Breast epithelium (tissue), 4 donors: ENCODE measurements at regions of chr10 and their contacts with region 1.

Region 1: GRCh38 chr10:31707093-31708039 is 221.3 kb downstream of the ARHGAP12 start:
- DNase-seq: no peak
- H3K4me3 ChIP-seq: peak overlapping the region in 1 of 3 donors; percentile 45
- H3K27ac ChIP-seq: peak overlapping the region; percentile 59 to 91
- H3K4me1 ChIP-seq: peaks cover 6 to 11% of the 10 kb centered on the region in 2 donors
- H3K27me3 ChIP-seq: no peaks in the 10 kb centered on the region
- CTCF ChIP-seq: no peak
- POLR2A ChIP-seq: no peak

Region 2: GRCh38 chr10:31171402-31172083 is 535.8 kb before region 1 on chr10:
- intact Hi-C with region 1: loop called (anchors 10 kb)
- DNase-seq: no peak
- H3K4me3 ChIP-seq: no peak overlapping the region
- H3K27ac ChIP-seq: no peak overlapping the region
- H3K4me1 ChIP-seq: no peaks in the 10 kb centered on the region
- H3K27me3 ChIP-seq: no peaks in the 10 kb centered on the region
- CTCF ChIP-seq: no peak
- POLR2A ChIP-seq: no peak